ENCODE measurements at regions of chr20 and their contacts with region 1.

Region 1: GRCh38 chr20:1392823-1393506 is at the start of gene FKBP1A:
- DNase-seq: no peak
- H3K4me3 ChIP-seq: peak within 1 kb of the TSS; percentile 75
- CTCF ChIP-seq: no peak

Region 2: GRCh38 chr20:1450926-1451491 is 58.0 kb after region 1 on chr20:
- in situ Hi-C with region 1: loop called (anchors 5 kb)
- DNase-seq: no peak
- H3K4me3 ChIP-seq: no peak overlapping the region
- CTCF ChIP-seq: no peak